A549 (cell line): ENCODE measurements at regions of chr15 and their contacts with region 1.

Region 1: GRCh38 chr15:53197426-53197839 is 407.3 kb upstream of the ONECUT1 start:
- DNase-seq: peak; percentile 69 to 80
- ATAC-seq: peak; percentile 91 to 99
- H3K4me3 ChIP-seq: peak overlapping the region; percentile 31
- H3K27ac ChIP-seq: peak overlapping the region; percentile 7 to 36; a peak in 1 of 6 replicates
- H3K4me1 ChIP-seq: 0 out of 3 replicates have a peak, but pooled peaks cover 6% of the 10 kb centered on the region
- CTCF ChIP-seq: peak; percentile 97
- EP300 ChIP-seq: no peak
- POLR2A ChIP-seq: no peak
- RAD21 ChIP-seq: peak; percentile 81 to 89

Region 2: GRCh38 chr15:52765785-52766184 is 431.6 kb before region 1 on chr15:
- CTCF ChIA-PET with region 1: interaction called, 10 read pairs
- POLR2A ChIA-PET with region 1: no interaction called
- DNase-seq: peak in 1 of 2 experiments; percentile 44
- ATAC-seq: peak; percentile 68 to 88; a peak in 5 of 6 replicates
- H3K4me3 ChIP-seq: no peak overlapping the region
- H3K27ac ChIP-seq: no peak overlapping the region
- H3K4me1 ChIP-seq: 0 out of 3 replicates have a peak, but pooled peaks cover 4% of the 10 kb centered on the region
- CTCF ChIP-seq: peak; percentile 27; the same call in 1 of the 3 replicates
- EP300 ChIP-seq: no peak
- POLR2A ChIP-seq: no peak
- RAD21 ChIP-seq: peak in 1 of 2 experiments; percentile 59

Region 3: GRCh38 chr15:52780172-52780980 is 417.1 kb before region 1 on chr15:
- CTCF ChIA-PET with region 1: interaction called, 20 read pairs
- POLR2A ChIA-PET with region 1: no interaction called
- DNase-seq: peak; percentile 55 to 64
- ATAC-seq: peak; percentile 52 to 73; a peak in 4 of 6 replicates
- H3K4me3 ChIP-seq: peak overlapping the region; percentile 24; the same call in 1 of the 3 replicates
- H3K27ac ChIP-seq: no peak overlapping the region
- H3K4me1 ChIP-seq: peaks cover 7% of the 10 kb centered on the region; the same call in 2 of the 3 replicates
- CTCF ChIP-seq: peak; percentile 99
- EP300 ChIP-seq: no peak
- POLR2A ChIP-seq: no peak
- RAD21 ChIP-seq: peak; percentile 95 to 97

Region 4: DNA sequence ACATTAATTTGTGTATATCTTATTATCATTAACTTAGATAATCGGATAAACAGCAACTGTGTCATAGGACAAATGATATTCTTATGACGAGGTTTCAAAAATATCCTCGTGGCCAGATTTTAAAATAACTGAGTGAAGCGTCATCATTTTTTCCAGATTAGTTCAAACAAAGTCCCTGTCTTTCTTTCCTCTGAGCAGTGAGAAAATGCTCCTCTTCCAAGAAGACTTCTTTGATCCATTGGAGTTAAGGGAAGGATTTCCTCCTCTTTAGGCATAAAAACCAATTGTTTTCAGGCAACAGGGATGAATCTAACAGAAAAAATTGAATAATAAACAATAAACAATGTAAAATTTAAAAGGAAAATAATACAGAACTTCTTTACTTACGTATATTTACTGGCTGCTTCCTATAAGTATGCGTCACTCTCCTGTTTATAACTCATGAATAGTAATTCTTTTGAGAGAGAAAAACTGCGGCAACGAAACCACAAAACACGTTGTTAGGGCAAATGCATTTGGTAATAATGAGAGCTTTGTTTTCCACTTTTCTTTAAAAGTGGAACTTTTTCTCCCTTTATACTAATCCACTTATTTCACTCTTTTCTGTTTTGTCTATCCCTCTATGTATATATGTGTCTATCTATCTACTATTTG is 12.1 kb after region 1 on chr15:
- CTCF ChIA-PET with region 1: interaction called, 26 read pairs
- POLR2A ChIA-PET with region 1: no interaction called
- DNase-seq: no peak
- ATAC-seq: no peak
- H3K4me3 ChIP-seq: no peak overlapping the region
- H3K27ac ChIP-seq: no peak overlapping the region
- H3K4me1 ChIP-seq: 0 out of 3 replicates have a peak, but pooled peaks cover 2% of the 10 kb centered on the region
- CTCF ChIP-seq: no peak
- EP300 ChIP-seq: no peak
- POLR2A ChIP-seq: no peak
- RAD21 ChIP-seq: no peak

Region 5: DNA sequence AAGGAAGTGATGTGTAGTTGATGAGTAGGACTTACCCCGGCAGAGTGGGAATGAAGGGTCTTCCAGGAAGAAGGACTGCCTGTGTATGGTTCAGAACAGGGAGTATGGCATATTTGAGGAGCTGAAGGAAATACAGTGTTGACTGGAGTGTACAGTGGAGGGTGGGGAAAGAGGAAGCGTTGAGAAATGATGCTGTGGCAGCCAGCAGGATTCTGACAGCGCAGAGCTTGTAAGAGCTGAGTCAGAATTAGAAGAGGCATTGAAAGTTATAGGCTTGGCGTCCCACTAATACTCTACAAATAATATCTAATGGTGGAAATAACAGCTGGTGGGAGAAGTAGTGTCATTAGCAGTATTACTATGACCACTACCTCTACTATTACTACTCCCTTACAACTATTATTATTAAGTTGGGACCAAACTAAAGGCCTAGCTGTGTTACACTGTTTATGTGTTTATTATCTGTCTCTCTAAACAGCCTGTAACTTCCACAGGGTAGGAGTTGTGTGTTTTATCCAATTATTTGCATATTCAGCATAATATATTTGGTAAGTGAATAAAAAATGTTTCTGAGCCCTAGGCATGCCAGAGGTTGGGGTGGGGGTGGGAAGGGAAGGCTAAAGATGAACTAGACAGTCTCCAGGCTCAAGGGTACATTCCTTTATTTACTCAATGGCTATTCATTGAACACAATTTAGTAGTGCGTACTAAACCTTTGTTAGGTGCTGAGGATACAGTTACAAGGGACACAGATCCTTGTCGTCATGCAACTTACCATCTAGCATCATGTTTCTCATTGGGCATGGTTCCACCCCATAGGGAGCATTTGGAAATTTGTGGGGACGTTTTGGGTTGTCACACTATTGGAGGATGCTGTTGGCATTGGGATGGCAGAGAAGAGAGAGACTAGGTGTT is 21.5 kb after region 1 on chr15:
- CTCF ChIA-PET with region 1: interaction called, 12 read pairs
- POLR2A ChIA-PET with region 1: no interaction called
- DNase-seq: no peak
- ATAC-seq: peak in 1 of 2 experiments; percentile 24; a peak in 1 of 6 replicates
- H3K4me3 ChIP-seq: no peak overlapping the region
- H3K27ac ChIP-seq: no peak overlapping the region
- H3K4me1 ChIP-seq: no peaks in the 10 kb centered on the region
- CTCF ChIP-seq: no peak
- EP300 ChIP-seq: no peak
- POLR2A ChIP-seq: no peak
- RAD21 ChIP-seq: no peak